Right lobe of liver (tissue), 6 donors: ENCODE measurements at regions of chr6 and their contacts with region 1.

Region 1: DNA sequence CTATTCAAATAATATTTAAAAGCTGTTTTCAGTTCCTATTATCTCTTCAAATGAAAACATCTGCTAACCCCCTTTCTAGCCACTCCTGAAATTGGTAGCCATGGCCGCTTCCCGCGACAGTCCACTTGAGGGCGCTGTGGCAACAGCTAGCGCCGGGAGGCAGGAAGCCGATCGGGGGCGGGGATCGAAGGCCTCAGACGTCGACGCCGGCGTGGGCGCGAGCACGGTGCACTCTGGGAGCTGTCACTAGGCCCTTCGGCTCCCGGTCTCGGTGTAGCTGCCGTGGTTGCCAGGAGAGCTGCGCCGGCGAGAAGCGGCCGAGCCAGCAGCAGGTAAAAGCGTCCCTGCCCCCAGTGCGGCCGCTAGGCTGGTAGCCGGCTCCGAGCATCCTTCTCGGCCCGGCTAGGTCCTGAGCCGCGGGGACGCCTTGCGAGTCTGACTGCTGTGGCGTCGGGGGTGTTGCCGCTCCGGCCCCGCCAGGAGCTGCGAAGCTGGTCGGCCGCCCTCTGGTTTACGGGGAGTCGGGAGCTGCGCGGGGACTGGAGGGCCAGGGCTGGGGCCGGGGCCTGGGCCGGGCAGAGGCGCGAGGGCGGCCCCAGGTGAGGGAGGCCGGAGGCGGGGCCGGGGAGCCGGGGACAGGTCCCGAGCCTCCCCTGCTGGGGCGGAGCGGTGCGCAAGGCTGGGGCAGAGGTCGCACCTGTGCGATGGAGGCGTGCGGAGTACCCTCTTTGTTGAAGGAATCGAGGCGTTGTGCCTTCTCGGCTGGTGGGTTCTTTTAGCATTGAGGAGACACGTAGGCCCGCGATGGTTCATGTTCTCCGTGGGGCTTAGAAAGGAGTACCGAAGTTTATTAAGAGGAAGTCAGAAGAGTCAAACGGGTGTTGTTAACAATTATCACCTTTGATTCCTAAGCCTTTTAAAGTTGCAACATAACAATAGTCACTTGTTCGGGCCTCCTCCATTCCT is at the start of gene DOP1A:
- DNase-seq: peak; percentile 96 to 97 (median 97)
- ATAC-seq: peak; percentile 89 to 94 (median 92)
- H3K4me3 ChIP-seq: peak within 1 kb of the TSS; percentile 92 to 96 (median 96)
- H3K27ac ChIP-seq: peak within 1 kb of the TSS; percentile 54 to 86 (median 76)
- H3K4me1 ChIP-seq: peaks cover 0 to 7% (median 2%) of the 10 kb centered on the region in 4 donors
- H3K27me3 ChIP-seq: no peaks in the 10 kb centered on the region
- CTCF ChIP-seq: peak; percentile 90 to 99 (median 99)
- POLR2A ChIP-seq: peak; percentile 67
- total RNA-seq, gene DOP1A: 8.9 to 15.1 (median 9.5) TPM

Region 2: GRCh38 chr6:83215131-83216047 is 147.7 kb after region 1 on chr6:
- intact Hi-C with region 1: loop called (anchors 5 kb)
- DNase-seq: peak in 2 of 3 donors; percentile 25 to 57
- ATAC-seq: peak; percentile 99 to 100 (median 99)
- H3K4me3 ChIP-seq: no peak overlapping the region
- H3K27ac ChIP-seq: no peak overlapping the region
- H3K4me1 ChIP-seq: no peaks in the 10 kb centered on the region
- H3K27me3 ChIP-seq: no peaks in the 10 kb centered on the region
- CTCF ChIP-seq: peak; percentile 71 to 90 (median 85)
- POLR2A ChIP-seq: no peak

Region 3: GRCh38 chr6:83488448-83488847 is 420.7 kb after region 1 on chr6:
- intact Hi-C with region 1: no loop called
- DNase-seq: no peak
- ATAC-seq: no peak
- H3K4me3 ChIP-seq: no peak overlapping the region
- H3K27ac ChIP-seq: no peak overlapping the region
- H3K4me1 ChIP-seq: no peaks in the 10 kb centered on the region
- H3K27me3 ChIP-seq: no peaks in the 10 kb centered on the region
- CTCF ChIP-seq: no peak
- POLR2A ChIP-seq: no peak